ENCODE measurements at regions of chr3 and their contacts with region 1.

Region 1: GRCh38 chr3:107124885-107125284 is 252.4 kb upstream of the CCDC54 start:
- DNase-seq: peak; percentile 60 to 85 (median 71)
- H3K4me3 ChIP-seq: no peak overlapping the region
- H3K27ac ChIP-seq: peak overlapping the region in 1 of 2 donors; percentile 82
- H3K4me1 ChIP-seq: peaks cover 3% of the 10 kb centered on the region
- H3K27me3 ChIP-seq: no peaks in the 10 kb centered on the region
- CTCF ChIP-seq: no peak
- EP300 ChIP-seq: no peak
- POLR2A ChIP-seq: no peak

Region 2: DNA sequence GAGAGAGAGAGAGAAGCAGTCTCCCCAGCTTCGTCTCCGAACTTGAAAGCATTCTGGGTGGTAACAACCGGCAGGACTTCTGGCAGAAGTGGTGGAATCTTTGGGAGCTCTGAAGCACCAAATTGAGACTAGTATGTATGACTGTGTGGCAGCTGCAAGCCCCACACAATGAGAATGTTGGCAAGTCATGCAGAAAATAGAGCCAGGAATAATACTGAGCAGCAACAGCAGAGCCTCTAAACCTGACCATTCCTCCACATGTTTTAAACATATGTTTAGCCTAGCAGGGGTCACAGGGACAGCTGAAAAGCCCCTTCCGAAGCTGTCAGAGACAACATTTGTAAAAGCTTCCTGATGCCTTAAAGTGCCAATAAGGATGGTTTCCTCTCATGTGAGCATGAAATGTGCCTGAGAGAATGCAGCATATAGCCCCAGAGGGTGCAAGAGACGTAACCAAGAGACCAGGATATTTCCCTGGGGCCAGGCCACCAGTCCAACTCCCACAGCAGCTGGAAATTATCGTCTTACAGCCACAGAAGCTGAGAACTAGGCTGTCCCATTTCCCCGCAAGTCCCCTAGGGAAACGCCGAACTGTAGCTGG is 73.8 kb after region 1 on chr3:
- intact Hi-C with region 1: loop called in 2 of 4 experiments (anchors 5 to 10 kb)
- DNase-seq: no peak
- H3K4me3 ChIP-seq: no peak overlapping the region
- H3K27ac ChIP-seq: peak overlapping the region in 1 of 2 donors; percentile 41
- H3K4me1 ChIP-seq: peaks cover 7% of the 10 kb centered on the region
- H3K27me3 ChIP-seq: no peaks in the 10 kb centered on the region
- CTCF ChIP-seq: no peak
- EP300 ChIP-seq: no peak
- POLR2A ChIP-seq: no peak

Region 3: DNA sequence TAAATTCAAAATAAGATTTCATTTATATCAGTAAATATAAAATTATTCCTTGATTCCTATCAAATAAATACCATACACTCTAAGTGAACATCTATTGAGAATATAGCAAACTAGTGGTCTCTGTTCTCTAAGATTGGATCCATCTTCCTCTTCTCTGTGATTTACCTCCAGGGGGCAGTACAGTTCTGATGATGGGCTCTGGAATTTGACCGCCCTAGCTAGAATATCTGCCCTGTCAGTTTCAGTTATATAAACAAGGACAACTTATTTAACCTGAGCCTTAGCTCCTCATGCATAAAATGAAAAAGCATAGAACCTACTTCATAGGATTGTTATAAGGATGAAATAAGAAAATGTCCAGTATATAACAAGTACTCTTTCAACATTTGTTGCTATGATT is 81.3 kb after region 1 on chr3:
- intact Hi-C with region 1: loop called in 1 of 4 experiments (anchors 10 kb)
- DNase-seq: no peak
- H3K4me3 ChIP-seq: no peak overlapping the region
- H3K27ac ChIP-seq: no peak overlapping the region
- H3K4me1 ChIP-seq: peaks cover 7% of the 10 kb centered on the region
- H3K27me3 ChIP-seq: no peaks in the 10 kb centered on the region
- CTCF ChIP-seq: peak in 1 of 3 donors; percentile 22
- EP300 ChIP-seq: no peak
- POLR2A ChIP-seq: no peak

Region 4: GRCh38 chr3:107264888-107265287 is 140.0 kb after region 1 on chr3:
- intact Hi-C with region 1: loop called in 1 of 4 experiments (anchors 10 kb)
- DNase-seq: no peak
- H3K4me3 ChIP-seq: no peak overlapping the region
- H3K27ac ChIP-seq: peak overlapping the region in 1 of 2 donors; percentile 36
- H3K4me1 ChIP-seq: peaks cover 2% of the 10 kb centered on the region
- H3K27me3 ChIP-seq: no peaks in the 10 kb centered on the region
- CTCF ChIP-seq: no peak
- EP300 ChIP-seq: no peak
- POLR2A ChIP-seq: no peak

Region 5: DNA sequence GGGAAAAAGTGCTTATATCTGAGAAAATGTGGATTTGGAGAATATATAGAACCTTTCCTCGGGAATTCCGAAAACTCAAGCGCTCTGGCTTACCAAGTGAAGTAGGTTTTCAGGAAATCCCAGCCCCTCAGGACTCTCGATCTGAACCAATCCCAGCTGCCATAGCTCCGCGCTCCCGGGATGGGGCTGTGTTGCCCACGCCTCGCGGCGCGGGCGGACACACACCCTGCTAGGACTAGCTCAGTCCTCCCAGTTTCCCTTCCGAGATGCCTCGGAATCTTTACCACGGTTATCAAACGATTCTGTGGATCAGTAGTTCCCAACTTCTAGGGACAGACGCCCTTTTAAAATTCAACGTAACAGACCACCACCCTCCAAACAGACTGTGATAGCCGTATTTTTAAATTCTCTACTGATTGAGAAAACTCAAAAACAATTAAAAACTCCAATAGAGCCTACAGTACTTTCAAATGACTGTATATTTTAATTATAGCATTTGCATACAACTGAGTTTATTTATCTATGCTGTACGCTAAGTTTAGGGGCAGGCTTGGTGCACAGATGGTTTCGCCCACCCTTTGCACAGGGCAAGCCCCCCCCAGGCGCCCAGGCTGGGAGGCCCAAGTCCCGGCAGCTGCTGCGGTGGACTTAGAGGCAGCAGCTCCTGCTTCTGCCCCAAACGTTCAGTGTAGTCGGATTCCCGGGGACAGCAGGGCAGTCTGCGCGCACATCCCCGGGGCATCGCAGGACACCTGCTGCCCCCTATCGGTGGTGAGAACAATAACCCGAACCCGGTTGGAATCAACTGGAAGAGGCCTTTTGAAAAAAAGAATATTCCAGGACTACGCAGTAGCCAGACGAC is 304.7 kb after region 1 on chr3:
- intact Hi-C with region 1: loop called in 1 of 4 experiments (anchors 2 kb)
- DNase-seq: peak; percentile 81 to 84 (median 83)
- H3K4me3 ChIP-seq: peak overlapping the region; percentile 77
- H3K27ac ChIP-seq: peak overlapping the region; percentile 84 to 99
- H3K4me1 ChIP-seq: no peaks in the 10 kb centered on the region
- H3K27me3 ChIP-seq: no peaks in the 10 kb centered on the region
- CTCF ChIP-seq: peak; percentile 80 to 88 (median 86)
- EP300 ChIP-seq: no peak
- POLR2A ChIP-seq: peak; percentile 37

Measured in ovary (tissue), 10 donors.